ENCODE measurements at regions of chr13 and their contacts with region 1.

Region 1: DNA sequence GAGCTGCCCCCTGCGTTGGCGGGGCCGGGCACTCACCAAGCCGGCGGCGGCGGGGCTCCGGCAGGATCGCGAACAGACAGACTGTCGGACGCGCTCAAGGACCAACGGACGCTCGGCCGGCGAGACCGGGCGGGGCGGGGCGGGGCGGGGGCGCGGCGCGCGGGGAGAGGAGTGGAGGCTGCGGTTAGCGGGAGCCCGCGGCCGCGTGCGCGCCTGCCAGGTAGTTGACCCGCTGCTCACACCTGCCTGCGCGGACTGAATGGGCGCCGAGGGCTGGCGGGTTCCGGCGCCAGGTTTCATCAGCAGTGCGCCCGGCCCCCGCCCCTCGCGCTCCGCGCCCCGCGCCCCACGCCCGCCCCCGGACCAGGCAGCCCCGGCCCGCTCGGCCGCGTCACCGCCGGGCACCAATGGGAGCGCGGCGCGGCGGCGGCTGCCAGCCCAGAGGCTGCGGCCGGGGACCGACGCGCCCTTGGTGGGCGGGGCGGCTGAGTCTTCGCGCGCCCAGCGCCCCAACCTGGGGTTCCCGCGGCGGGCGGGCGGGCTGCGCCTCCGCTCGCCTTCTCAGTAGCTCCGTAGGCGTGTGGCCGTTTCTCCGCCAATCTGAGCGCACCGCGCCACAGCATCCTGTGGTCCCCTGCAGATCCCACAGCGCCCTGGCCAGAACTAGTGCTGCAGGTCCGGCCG is at the start of gene SLC7A1:
- DNase-seq: peak in 1 of 2 donors; percentile 24
- ATAC-seq: peak; percentile 72 to 81
- H3K4me3 ChIP-seq: peak within 1 kb of the TSS; percentile 54 to 74 (median 60)
- H3K27ac ChIP-seq: peak within 1 kb of the TSS; percentile 52 to 67 (median 66)
- H3K4me1 ChIP-seq: peaks cover 0 to 4% of the 10 kb centered on the region in 2 donors
- H3K27me3 ChIP-seq: peaks cover 0 to 17% (median 8%) of the 10 kb centered on the region in 3 donors
- CTCF ChIP-seq: no peak
- POLR2A ChIP-seq: peak; percentile 14 to 38
- total RNA-seq, gene SLC7A1: 1.6 to 4.6 (median 3.7) TPM

Region 2: GRCh38 chr13:29513397-29514322 is 81.9 kb before region 1 on chr13:
- in situ Hi-C with region 1: no loop called
- intact Hi-C with region 1: loop called (anchors 5 kb)
- DNase-seq: no peak
- ATAC-seq: no peak
- H3K4me3 ChIP-seq: no peak overlapping the region
- H3K27ac ChIP-seq: no peak overlapping the region
- H3K4me1 ChIP-seq: no peaks in the 10 kb centered on the region
- H3K27me3 ChIP-seq: no peaks in the 10 kb centered on the region
- CTCF ChIP-seq: no peak
- POLR2A ChIP-seq: no peak

Region 3: GRCh38 chr13:29550398-29550988 is 45.0 kb before region 1 on chr13:
- in situ Hi-C with region 1: no loop called
- intact Hi-C with region 1: no loop called
- DNase-seq: no peak
- ATAC-seq: no peak
- H3K4me3 ChIP-seq: no peak overlapping the region
- H3K27ac ChIP-seq: no peak overlapping the region
- H3K4me1 ChIP-seq: no peaks in the 10 kb centered on the region
- H3K27me3 ChIP-seq: no peaks in the 10 kb centered on the region
- CTCF ChIP-seq: no peak
- POLR2A ChIP-seq: no peak

Region 4: GRCh38 chr13:29561918-29562317 is 33.6 kb before region 1 on chr13:
- in situ Hi-C with region 1: no loop called
- intact Hi-C with region 1: no loop called
- DNase-seq: no peak
- ATAC-seq: no peak
- H3K4me3 ChIP-seq: no peak overlapping the region
- H3K27ac ChIP-seq: no peak overlapping the region
- H3K4me1 ChIP-seq: no peaks in the 10 kb centered on the region
- H3K27me3 ChIP-seq: no peaks in the 10 kb centered on the region
- CTCF ChIP-seq: no peak
- POLR2A ChIP-seq: no peak

Region 5: GRCh38 chr13:29676941-29677452 is 81.5 kb after region 1 on chr13:
- in situ Hi-C with region 1: no loop called
- intact Hi-C with region 1: no loop called
- DNase-seq: no peak
- ATAC-seq: no peak
- H3K4me3 ChIP-seq: no peak overlapping the region
- H3K27ac ChIP-seq: no peak overlapping the region
- H3K4me1 ChIP-seq: no peaks in the 10 kb centered on the region
- H3K27me3 ChIP-seq: no peaks in the 10 kb centered on the region
- CTCF ChIP-seq: no peak
- POLR2A ChIP-seq: no peak